Calu3 (cell line): ENCODE measurements at regions of chr1 and their contacts with region 1.

Region 1: GRCh38 chr1:186680245-186681061 is at the start of gene PTGS2:
- DNase-seq: peak; percentile 96
- H3K4me3 Mint-ChIP-seq: peak within 1 kb of the TSS; percentile 82
- H3K27ac Mint-ChIP-seq: peak within 1 kb of the TSS; percentile 82
- H3K4me1 Mint-ChIP-seq: peaks cover 25% of the 10 kb centered on the region
- H3K27me3 Mint-ChIP-seq: no peaks in the 10 kb centered on the region
- CTCF ChIP-seq: peak; percentile 70
- total RNA-seq, gene PTGS2: 64.2 and 78.2 TPM in 2 replicates

Region 2: DNA sequence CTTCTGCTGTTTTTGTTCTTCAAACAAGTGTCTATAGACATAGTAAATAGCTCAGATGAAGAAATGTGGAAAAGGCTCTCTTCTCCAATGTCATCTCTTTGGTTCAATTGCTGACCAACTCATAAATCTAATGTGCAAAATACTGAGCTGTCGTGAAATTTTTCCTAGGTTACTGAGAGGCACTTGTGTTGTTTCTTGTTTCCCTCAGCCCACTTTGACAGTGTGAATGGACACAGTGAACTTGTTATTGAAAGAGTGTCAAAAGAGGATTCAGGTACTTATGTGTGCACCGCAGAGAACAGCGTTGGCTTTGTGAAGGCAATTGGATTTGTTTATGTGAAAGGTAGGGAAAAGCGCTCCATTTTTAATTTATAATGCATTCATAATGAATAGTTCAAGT is 550.7 kb before region 1 on chr1:
- CTCF ChIA-PET with region 1: no interaction called
- intact Hi-C with region 1: no loop called
- DNase-seq: no peak
- H3K4me3 Mint-ChIP-seq: no peak overlapping the region
- H3K27ac Mint-ChIP-seq: no peak overlapping the region
- H3K4me1 Mint-ChIP-seq: no peaks in the 10 kb centered on the region
- H3K27me3 Mint-ChIP-seq: no peaks in the 10 kb centered on the region
- CTCF ChIP-seq: no peak

Region 3: GRCh38 chr1:186482661-186483255 is 197.7 kb before region 1 on chr1:
- CTCF ChIA-PET with region 1: interaction called, 3 read pairs
- intact Hi-C with region 1: loop called (anchors 1 kb)
- DNase-seq: peak; percentile 78
- H3K4me3 Mint-ChIP-seq: no peak overlapping the region
- H3K27ac Mint-ChIP-seq: no peak overlapping the region
- H3K4me1 Mint-ChIP-seq: peaks cover 28% of the 10 kb centered on the region
- H3K27me3 Mint-ChIP-seq: no peaks in the 10 kb centered on the region
- CTCF ChIP-seq: peak; percentile 97

Region 4: DNA sequence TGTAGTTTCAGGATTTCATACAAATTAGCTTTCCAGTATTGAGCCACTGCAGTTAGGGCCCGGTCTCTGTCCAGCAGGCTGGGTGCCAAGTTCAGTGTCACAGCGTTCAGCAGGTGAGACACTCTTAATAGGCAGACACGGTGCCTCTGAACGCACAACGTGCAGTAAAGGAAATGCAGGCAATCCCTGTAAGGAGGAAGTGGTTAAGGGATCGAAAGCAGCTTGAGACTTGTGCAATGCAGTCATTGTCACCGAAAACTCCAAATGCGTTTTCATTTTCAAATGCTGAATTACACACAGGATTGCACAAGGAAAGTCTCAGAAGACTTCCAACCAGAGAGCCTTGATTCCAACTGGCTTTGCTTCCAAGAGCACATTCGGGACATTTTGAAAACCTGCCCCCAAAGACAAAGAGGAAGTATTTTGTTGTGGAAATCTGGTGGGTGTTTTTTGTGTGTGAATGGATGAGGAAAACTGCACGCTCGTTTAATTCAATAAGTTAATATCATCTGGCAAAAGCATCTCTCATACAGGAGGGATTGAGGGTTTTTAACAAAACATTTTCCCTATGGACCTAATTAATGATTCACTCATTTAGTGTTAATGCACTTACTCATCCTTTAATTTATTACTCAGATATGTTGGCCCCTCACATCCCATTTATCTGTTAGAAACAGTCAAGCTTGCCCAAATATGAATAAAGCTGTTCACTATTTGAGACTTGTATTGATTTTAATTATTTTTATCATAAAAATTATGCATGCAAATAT is 61.9 kb before region 1 on chr1:
- CTCF ChIA-PET with region 1: interaction called, 5 read pairs
- intact Hi-C with region 1: loop called (anchors 2 kb)
- DNase-seq: peak; percentile 76
- H3K4me3 Mint-ChIP-seq: peak overlapping the region; percentile 9
- H3K27ac Mint-ChIP-seq: peak overlapping the region; percentile 39
- H3K4me1 Mint-ChIP-seq: peaks cover 15% of the 10 kb centered on the region
- H3K27me3 Mint-ChIP-seq: no peaks in the 10 kb centered on the region
- CTCF ChIP-seq: no peak

Region 5: DNA sequence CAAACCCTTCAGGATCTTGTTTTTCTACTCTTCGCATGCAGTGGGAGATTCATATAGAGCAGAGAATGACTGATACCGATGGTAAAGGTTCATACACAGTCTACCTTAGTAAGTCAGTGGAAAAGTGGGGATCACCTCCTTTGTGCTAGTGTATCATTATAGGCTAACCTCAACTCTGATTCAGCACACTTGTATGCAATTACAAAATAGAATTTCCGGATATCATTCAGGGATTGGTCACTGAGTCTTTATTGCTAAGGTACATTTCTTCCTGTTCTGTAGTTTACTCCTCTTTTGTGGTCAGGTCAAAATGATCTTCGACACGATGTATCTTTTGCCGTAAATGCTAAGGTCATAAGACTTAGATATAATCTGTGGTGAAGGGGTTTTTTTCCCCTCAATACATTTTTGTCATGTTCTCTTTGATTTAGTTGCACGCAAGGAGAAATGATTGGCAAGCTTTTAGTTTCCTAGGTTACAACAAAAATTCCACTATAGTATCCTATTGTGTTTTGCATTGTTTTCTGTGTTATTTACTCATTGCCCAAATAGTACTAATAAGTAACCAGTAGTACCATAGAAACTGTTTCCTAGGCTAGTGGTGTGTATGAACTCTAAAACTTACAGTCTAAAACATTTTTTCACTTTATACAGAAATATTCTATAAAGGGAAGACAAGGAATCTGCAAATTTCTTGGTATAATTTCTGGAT is 112.6 kb after region 1 on chr1:
- CTCF ChIA-PET with region 1: no interaction called
- intact Hi-C with region 1: loop called (anchors 5 kb)
- DNase-seq: peak; percentile 15
- H3K4me3 Mint-ChIP-seq: peak overlapping the region; percentile 48
- H3K27ac Mint-ChIP-seq: peak overlapping the region; percentile 90
- H3K4me1 Mint-ChIP-seq: peaks cover 25% of the 10 kb centered on the region
- H3K27me3 Mint-ChIP-seq: no peaks in the 10 kb centered on the region
- CTCF ChIP-seq: no peak

Region 6: DNA sequence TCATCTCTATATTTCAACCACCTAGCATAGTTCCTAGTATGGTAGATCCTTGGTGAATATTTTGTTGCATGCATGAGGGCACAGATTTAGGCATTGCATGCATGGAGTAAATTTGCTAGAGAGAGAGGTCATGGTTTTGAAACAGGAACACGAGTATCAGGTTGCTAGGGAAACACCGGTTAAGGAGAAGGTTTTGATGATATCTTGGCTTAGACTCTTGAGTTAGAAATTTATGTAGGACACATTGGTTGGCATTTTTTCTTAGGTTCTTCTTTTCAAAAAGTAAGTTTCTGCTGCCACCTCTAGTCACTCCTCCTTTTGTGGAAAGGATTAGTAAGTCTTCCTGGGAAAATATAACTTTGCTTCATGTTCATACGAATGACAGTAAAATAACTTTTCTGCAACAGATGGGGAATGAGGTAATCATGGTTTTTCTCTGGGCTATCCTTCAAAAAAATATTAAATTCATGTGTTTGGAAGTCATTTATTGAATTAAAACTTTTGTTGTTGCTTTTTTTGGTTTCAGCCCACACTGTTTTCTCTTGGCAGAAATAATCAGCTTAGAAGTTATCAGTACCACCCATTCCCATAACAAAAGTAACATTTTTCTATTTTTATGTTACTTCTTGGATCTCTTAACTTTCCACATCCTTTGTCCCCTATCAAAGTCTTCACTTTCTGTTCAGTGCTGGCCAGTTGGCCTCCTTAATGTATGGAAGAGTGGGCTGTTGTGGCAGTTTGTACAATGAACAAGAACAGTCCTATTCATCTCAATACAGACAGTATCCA is 245.6 kb after region 1 on chr1:
- CTCF ChIA-PET with region 1: no interaction called
- intact Hi-C with region 1: loop called (anchors 5 kb)
- DNase-seq: no peak
- H3K4me3 Mint-ChIP-seq: no peak overlapping the region
- H3K27ac Mint-ChIP-seq: peak overlapping the region; percentile 30
- H3K4me1 Mint-ChIP-seq: peaks cover 58% of the 10 kb centered on the region
- H3K27me3 Mint-ChIP-seq: no peaks in the 10 kb centered on the region
- CTCF ChIP-seq: no peak